AG04449 (cell line): ENCODE measurements at regions of chr16 and their contacts with region 1.

Region 1: GRCh38 chr16:85717393-85718121 is 28.8 kb upstream of the GINS2 start:
- DNase-seq: no peak
- H3K4me3 ChIP-seq: no peak overlapping the region
- CTCF ChIP-seq: peak; percentile 48

Region 2: GRCh38 chr16:85245307-85246172 is 472.0 kb before region 1 on chr16:
- CTCF ChIA-PET with region 1: interaction called, 13 read pairs
- POLR2A ChIA-PET with region 1: no interaction called
- DNase-seq: no peak
- H3K4me3 ChIP-seq: no peak overlapping the region
- CTCF ChIP-seq: peak; percentile 89

Region 3: GRCh38 chr16:85275533-85276249 is 441.9 kb before region 1 on chr16:
- CTCF ChIA-PET with region 1: interaction called, 12 read pairs
- POLR2A ChIA-PET with region 1: no interaction called
- DNase-seq: no peak
- H3K4me3 ChIP-seq: no peak overlapping the region
- CTCF ChIP-seq: peak; percentile 96

Region 4: DNA sequence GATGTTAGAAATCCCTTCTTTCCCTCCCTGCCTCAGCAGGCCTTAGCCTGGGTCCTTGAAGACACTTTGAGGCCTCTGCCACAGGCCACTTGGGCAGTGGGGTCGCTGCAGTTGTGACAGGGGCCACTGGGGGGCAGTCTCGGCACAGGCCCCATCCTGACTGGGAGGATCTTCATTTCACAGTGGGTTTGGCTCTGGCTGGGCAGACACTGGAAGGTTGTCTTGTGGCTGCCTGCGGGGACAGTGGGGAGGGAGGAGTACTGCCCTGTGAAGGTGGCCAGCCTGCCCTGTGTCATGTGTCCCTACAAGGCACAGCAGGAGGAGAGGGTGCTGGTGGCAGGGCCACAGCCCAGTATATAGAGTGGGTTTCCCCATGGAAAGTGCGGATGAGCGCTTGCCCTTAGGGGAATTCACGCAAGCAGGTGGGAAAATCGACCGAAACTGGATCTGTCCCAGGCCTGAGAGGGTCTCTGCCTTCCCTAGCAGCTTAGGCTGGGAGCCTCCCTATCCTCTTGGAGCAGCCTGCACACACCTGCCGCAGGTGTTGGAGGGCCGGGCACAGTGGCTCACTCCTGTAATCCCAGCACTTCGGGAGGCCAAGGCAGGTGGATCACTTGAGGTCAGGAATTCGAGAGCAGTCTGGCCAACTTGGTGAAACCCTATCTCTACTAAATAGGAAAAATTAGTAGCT is 57.6 kb before region 1 on chr16:
- CTCF ChIA-PET with region 1: interaction called, 85 read pairs
- POLR2A ChIA-PET with region 1: no interaction called
- DNase-seq: no peak
- H3K4me3 ChIP-seq: no peak overlapping the region
- CTCF ChIP-seq: peak; percentile 92

Region 5: DNA sequence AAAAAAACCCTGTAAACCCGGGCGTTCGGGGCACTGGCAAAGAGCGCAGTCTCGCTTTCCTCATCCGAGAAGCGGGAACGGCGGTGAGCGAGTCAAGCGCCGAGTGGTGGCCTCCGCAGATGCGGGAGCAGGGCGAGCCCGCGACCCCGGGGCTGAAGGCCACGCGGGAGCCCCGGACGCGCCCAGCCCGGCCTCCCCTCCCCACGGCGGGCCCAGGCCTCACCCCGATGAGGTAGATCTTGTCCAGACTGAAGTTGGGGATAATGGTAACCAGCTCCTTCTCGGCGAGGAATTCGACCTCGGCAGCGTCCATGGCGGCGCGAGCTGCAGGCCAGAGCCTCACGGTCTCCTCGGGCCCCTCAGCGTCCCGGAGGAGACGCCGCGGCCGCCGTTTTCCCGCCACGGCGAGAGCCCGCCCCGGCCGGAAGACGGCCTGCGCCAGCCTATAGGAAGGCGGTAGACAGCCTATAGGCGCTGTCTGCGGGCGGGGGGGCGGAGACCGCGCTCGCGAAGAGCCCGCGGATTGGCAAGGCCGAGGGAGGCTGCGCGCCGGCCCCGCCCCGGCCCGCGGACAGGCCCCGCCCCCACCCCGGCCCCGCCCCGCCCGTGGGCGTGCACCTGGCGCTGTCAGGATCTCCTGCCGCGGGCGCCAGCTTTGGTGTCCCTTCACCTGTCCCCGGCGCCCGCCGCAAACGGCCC is 28.8 kb before region 1 on chr16 and contains the start of gene GINS2:
- CTCF ChIA-PET with region 1: interaction called, 220 read pairs
- POLR2A ChIA-PET with region 1: no interaction called
- DNase-seq: peak; percentile 34
- H3K4me3 ChIP-seq: peak within 1 kb of the TSS; percentile 79
- CTCF ChIP-seq: no peak

Region 6: DNA sequence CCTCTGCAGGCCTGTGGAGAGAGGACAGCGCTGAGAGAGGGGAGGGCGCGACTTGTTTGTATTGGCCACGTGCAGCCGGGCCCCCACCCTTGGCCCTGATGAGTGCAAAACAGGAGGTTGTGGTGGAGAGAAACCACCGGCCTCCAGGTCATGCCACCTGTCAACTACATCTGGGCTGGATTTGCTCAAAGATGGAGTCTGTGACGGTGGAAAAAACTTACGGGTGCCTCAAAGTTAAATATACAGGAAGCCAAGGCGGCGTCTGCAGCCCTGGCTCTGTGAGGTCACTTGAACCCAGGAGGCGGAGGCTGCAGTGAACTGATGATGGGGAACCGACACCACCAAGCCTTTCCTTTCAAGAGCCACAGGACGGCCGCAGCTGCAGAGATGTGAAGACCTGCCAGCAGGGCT is 17.7 kb after region 1 on chr16:
- CTCF ChIA-PET with region 1: interaction called, 31 read pairs
- POLR2A ChIA-PET with region 1: no interaction called
- DNase-seq: no peak
- H3K4me3 ChIP-seq: no peak overlapping the region
- CTCF ChIP-seq: no peak